GM18951 (cell line): ENCODE measurements at regions of chr11 and their contacts with region 1.

Region 1: GRCh38 chr11:12706545-12707499 is 32.6 kb downstream of the TEAD1 start:
- POLR2A ChIP-seq: no peak

Region 2: DNA sequence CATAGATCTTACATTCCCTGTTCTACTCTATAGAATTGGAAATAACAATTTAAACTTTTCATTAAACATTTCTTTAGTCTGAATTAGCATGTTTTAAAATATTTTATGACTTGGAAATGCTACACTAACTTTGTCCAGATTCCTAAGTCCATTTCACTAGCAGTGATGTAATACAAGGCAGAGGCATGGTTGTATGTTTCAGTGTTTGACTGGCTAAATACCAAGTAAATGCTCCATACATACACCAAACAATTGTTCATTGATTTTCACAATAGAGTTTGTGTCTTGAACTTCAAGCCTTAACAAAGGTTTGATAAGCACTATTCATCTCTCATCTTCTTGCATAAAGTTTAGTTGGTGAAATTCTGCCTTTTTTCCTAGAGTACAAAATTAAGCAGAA is 1862.5 kb before region 1 on chr11:
- in situ Hi-C with region 1: loop called (anchors 10 kb)
- POLR2A ChIP-seq: no peak

Region 3: GRCh38 chr11:12755510-12756453 is 49.0 kb after region 1 on chr11:
- in situ Hi-C with region 1: no loop called
- POLR2A ChIP-seq: no peak